ENCODE measurements at regions of chr10 and their contacts with region 1.

Region 1: DNA sequence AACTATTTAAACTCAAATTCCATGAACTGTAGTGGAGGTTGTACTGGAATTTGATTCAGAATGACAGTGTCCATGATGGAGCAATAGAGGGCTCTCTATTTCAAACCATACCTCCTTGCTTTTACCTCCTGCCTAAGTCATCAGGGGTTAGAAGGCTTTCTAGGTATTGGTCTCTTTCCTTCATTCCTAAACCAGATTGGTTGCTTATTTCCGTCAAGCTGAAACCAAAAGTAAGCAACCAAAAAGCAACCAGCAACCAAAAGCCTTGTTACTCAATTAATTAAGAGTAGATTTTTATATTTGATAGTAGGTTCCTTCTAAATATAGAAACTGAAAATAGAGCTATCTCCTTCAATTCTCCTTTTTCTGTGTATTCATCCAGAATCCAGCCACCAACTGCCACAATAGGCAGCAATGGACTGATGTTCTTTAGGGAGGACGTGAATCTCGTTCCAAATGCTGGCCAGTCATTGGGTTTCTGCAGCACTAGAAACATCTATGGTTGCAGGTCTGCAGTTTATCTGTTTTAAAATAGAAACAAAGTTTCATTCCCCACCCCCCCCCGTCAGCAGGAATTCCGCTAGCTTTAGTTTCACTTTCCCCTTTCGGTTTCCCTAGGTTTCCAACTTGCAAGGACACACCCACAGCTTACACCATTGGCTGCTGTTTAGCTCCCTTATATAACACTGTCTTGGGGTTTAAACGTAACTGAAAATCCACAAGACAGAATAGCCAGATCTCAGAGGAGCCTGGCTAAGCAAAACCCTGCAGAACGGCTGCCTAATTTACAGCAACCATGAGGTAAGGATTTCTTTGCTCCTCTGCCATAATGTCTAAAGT is at the start of gene IFIT1:
- DNase-seq: peak; percentile 95
- ATAC-seq: peak; percentile 94
- H3K4me3 ChIP-seq: peak within 1 kb of the TSS; percentile 68
- H3K27ac ChIP-seq: peak within 1 kb of the TSS; percentile 87
- H3K4me1 ChIP-seq: no peaks in the 10 kb centered on the region; the same call in 1 of the 2 replicates
- H3K27me3 ChIP-seq: no peaks in the 10 kb centered on the region
- CTCF ChIP-seq: no peak
- POLR2A ChIP-seq: no peak
- RAD21 ChIP-seq: no peak
- total RNA-seq, gene IFIT1: 6.8 and 7.5 TPM in 2 replicates

Region 2: GRCh38 chr10:88728107-88728763 is 663.9 kb before region 1 on chr10:
- CTCF ChIA-PET with region 1: no interaction called
- POLR2A ChIA-PET with region 1: no interaction called
- dilution Hi-C with region 1: no loop called
- in situ Hi-C with region 1: no loop called
- intact Hi-C with region 1: no loop called
- DNase-seq: no peak
- ATAC-seq: no peak
- H3K4me3 ChIP-seq: no peak overlapping the region
- H3K27ac ChIP-seq: no peak overlapping the region
- H3K4me1 ChIP-seq: no peaks in the 10 kb centered on the region
- H3K27me3 ChIP-seq: peaks cover 19% of the 10 kb centered on the region
- CTCF ChIP-seq: peak; percentile 20; the same call in 1 of the 2 replicates
- POLR2A ChIP-seq: no peak
- RAD21 ChIP-seq: peak; percentile 12; the same call in 1 of the 2 replicates

Region 3: GRCh38 chr10:89029785-89030437 is 362.2 kb before region 1 on chr10:
- CTCF ChIA-PET with region 1: no interaction called
- POLR2A ChIA-PET with region 1: no interaction called
- dilution Hi-C with region 1: no loop called
- in situ Hi-C with region 1: loop called (anchors 10 kb)
- intact Hi-C with region 1: no loop called
- DNase-seq: peak; percentile 84
- ATAC-seq: peak; percentile 57
- H3K4me3 ChIP-seq: no peak overlapping the region
- H3K27ac ChIP-seq: no peak overlapping the region
- H3K4me1 ChIP-seq: peaks cover 16% of the 10 kb centered on the region
- H3K27me3 ChIP-seq: no peaks in the 10 kb centered on the region
- CTCF ChIP-seq: peak; percentile 92
- POLR2A ChIP-seq: no peak
- RAD21 ChIP-seq: peak; percentile 95

Region 4: DNA sequence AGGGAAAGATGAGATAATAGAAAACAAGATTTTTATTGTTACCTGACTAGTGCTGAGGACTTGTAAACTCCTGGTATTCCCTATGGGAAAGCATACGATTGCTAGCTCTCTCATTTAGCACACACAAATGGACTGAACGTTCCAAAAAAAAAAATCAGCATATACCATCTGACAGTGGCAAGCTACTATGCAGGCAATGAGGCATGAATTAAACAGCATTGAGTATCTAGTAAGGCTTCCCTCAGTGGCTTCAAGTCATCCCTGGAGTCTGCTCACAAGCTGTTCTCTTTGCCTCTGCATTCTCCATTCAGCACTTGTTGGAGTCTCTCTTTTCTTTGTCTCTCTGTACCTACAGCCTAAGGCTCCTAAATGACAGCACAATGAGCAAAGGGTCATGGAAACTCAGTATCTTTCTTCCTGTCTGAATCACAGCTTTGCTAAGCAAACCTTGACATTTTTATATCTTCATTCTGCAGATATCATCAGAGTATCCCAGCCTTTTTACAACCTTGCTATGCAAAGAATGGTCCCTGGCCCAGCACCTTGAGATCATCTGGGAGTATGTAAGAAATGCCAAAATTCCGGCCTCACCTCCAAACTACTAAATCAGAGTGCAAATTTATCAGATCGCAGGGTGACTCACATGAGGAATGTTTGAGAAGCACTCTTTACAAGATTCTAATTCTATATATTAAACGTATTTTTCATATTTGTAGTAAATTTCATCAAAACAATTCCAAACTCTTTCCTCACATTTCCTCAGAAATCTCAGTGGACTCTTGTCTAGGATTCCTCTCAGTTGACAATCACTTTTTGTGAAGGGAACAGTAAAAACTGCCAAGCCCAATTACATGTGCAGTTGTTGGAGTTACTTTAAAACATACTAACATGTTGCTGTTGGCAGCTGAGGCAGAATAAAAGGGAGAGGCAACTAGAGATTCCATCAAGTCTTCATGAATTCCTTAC is 129.8 kb before region 1 on chr10:
- CTCF ChIA-PET with region 1: no interaction called
- POLR2A ChIA-PET with region 1: interaction called, 19 read pairs
- dilution Hi-C with region 1: no loop called
- in situ Hi-C with region 1: no loop called
- intact Hi-C with region 1: no loop called
- DNase-seq: peak; percentile 19
- ATAC-seq: 0 out of 2 replicates have a peak, but pooled peaks have one; percentile 10
- H3K4me3 ChIP-seq: no peak overlapping the region
- H3K27ac ChIP-seq: no peak overlapping the region
- H3K4me1 ChIP-seq: peaks cover 7% of the 10 kb centered on the region
- H3K27me3 ChIP-seq: no peaks in the 10 kb centered on the region
- CTCF ChIP-seq: no peak
- POLR2A ChIP-seq: no peak
- RAD21 ChIP-seq: no peak

Region 5: GRCh38 chr10:89414146-89414878 is 22.2 kb after region 1 on chr10 and contains the start of gene IFIT5:
- CTCF ChIA-PET with region 1: interaction called, 4 read pairs
- POLR2A ChIA-PET with region 1: interaction called, 10 read pairs
- dilution Hi-C with region 1: no loop called
- in situ Hi-C with region 1: no loop called
- intact Hi-C with region 1: no loop called
- DNase-seq: peak; percentile 67
- ATAC-seq: peak; percentile 92
- H3K4me3 ChIP-seq: peak within 1 kb of the TSS; percentile 88
- H3K27ac ChIP-seq: peak within 1 kb of the TSS; percentile 91
- H3K4me1 ChIP-seq: peaks cover 4% of the 10 kb centered on the region
- H3K27me3 ChIP-seq: no peaks in the 10 kb centered on the region
- CTCF ChIP-seq: no peak
- POLR2A ChIP-seq: no peak; the same call in 1 of the 2 replicates
- RAD21 ChIP-seq: peak; percentile 21; the same call in 1 of the 2 replicates
- total RNA-seq, gene IFIT5: 18.1 and 21.7 TPM in 2 replicates

Measured in IMR-90 (cell line).